Upper lobe of right lung (tissue), 1 donor: ENCODE measurements at regions of chr2 and their contacts with region 1.

Region 1: GRCh38 chr2:108351889-108352288 is 25.9 kb upstream of the SULT1C4 start:
- DNase-seq: no peak
- ATAC-seq: no peak
- H3K4me3 ChIP-seq: no peak overlapping the region
- H3K27ac ChIP-seq: no peak overlapping the region
- H3K4me1 ChIP-seq: no peaks in the 10 kb centered on the region
- H3K27me3 ChIP-seq: no peaks in the 10 kb centered on the region
- CTCF ChIP-seq: no peak

Region 2: DNA sequence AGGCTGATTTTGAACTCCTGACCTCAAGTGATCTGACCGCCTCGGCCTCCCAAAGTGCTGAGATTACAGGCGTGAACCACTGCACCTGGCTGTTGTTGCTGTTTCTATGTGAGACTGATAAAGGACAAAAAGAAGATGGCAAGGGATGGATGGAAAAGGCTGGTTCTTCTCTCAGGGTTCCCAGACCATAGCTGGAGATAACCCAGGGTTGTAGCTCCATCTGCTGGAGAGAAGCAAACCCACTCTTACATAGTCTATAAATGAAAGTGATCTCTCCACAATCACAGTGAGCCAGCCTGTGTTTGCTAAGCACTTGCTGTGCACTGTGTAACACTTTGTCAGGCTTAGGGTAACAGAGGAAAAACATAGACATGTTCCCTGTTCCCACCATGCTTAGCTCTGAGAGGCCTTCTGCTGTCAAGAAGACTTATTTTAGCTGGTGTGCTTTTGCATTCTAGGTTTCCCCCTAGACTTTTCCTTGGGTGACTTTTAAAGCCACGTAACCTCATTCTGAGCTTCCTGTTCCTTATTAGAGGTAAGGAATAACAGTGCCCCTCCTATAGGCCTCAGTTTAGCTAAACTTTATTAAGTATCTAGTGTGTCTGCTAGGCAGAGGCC is 232.1 kb after region 1 on chr2:
- intact Hi-C with region 1: loop called (anchors 10 kb)
- DNase-seq: no peak
- ATAC-seq: peak; percentile 93
- H3K4me3 ChIP-seq: no peak overlapping the region
- H3K27ac ChIP-seq: no peak overlapping the region
- H3K4me1 ChIP-seq: peaks cover 41% of the 10 kb centered on the region
- H3K27me3 ChIP-seq: no peaks in the 10 kb centered on the region
- CTCF ChIP-seq: peak; percentile 86